ENCODE measurements at regions of chr7 and their contacts with region 1.

Region 1: GRCh38 chr7:142535123-142535779 is 214.0 kb upstream of the PRSS1 start:
- DNase-seq: peak; percentile 42
- H3K4me3 ChIP-seq: no peak overlapping the region
- H3K27me3 ChIP-seq: no peaks in the 10 kb centered on the region
- CTCF ChIP-seq: peak; percentile 87

Region 2: GRCh38 chr7:142485617-142486226 is 49.5 kb before region 1 on chr7:
- CTCF ChIA-PET with region 1: interaction called, 10 read pairs
- POLR2A ChIA-PET with region 1: no interaction called
- DNase-seq: no peak
- H3K4me3 ChIP-seq: no peak overlapping the region
- H3K27me3 ChIP-seq: peaks cover 6% of the 10 kb centered on the region; the same call in 1 of the 2 replicates
- CTCF ChIP-seq: peak; percentile 66

Region 3: DNA sequence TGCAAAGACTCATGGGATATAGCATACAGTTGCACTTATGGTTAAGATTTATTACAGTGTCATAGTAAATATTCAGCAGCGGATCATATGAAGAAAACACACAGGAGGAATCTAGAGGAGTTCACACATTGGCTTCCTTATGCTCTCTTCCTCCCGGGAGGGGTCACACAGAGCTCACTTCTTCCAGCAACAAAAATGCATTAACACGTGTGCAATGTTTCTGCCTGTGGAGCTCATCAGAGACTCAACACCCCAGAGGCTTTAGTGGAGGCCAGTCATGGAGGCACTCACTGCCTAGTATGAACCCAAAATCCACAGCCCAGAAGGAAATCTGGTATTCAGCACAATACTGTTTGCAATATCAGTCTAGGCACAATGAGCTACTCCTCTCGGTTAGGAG is 11.2 kb after region 1 on chr7:
- CTCF ChIA-PET with region 1: interaction called, 14 read pairs
- POLR2A ChIA-PET with region 1: no interaction called
- DNase-seq: no peak
- H3K4me3 ChIP-seq: no peak overlapping the region
- H3K27me3 ChIP-seq: no peaks in the 10 kb centered on the region
- CTCF ChIP-seq: no peak

Region 4: DNA sequence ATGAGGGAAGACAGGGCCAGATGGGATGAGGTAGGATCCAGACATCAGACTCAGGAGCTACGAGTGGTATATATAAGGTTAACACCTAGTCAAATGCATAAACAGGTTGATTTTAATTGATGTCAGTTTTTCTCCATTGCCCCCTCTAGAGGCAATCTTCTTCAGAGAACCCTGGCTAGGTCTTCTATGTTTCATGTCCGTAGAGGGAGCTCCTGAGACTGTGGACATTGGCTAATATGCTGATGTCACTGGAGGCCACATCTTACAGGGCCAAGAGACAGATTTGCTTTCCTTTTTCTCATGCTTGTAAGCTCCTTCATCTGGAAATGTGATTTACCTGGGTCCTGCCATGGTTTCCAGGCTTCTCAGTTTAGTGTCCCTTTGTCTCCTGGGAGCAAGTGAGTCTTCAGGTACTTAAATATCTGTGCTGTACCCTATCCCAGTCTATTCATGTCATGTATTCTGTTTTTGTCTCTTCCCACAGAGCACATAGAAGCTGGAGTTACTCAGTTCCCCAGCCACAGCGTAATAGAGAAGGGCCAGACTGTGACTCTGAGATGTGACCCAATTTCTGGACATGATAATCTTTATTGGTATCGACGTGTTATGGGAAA is 52.4 kb after region 1 on chr7:
- CTCF ChIA-PET with region 1: interaction called, 68 read pairs
- POLR2A ChIA-PET with region 1: no interaction called
- DNase-seq: no peak
- H3K4me3 ChIP-seq: no peak overlapping the region
- H3K27me3 ChIP-seq: no peaks in the 10 kb centered on the region
- CTCF ChIP-seq: peak; percentile 84

Region 5: GRCh38 chr7:142632291-142633134 is 97.3 kb after region 1 on chr7:
- CTCF ChIA-PET with region 1: interaction called, 56 read pairs
- POLR2A ChIA-PET with region 1: no interaction called
- DNase-seq: no peak
- H3K4me3 ChIP-seq: no peak overlapping the region
- H3K27me3 ChIP-seq: no peaks in the 10 kb centered on the region
- CTCF ChIP-seq: peak; percentile 79

Region 6: DNA sequence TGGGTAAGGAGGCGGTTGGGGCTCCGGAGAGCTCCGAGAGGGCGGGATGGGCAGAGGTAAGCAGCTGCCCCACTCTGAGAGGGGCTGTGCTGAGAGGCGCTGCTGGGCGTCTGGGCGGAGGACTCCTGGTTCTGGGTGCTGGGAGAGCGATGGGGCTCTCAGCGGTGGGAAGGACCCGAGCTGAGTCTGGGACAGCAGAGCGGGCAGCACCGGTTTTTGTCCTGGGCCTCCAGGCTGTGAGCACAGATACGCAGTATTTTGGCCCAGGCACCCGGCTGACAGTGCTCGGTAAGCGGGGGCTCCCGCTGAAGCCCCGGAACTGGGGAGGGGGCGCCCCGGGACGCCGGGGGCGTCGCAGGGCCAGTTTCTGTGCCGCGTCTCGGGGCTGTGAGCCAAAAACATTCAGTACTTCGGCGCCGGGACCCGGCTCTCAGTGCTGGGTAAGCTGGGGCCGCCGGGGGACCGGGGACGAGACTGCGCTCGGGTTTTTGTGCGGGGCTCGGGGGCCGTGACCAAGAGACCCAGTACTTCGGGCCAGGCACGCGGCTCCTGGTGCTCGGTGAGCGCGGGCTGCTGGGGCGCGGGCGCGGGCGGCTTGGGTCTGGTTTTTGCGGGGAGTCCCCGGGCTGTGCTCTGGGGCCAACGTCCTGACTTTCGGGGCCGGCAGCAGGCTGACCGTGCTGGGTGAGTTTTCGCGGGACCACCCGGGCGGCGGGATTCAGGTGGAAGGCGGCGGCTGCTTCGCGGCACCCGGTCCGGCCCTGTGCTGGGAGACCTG is 261.5 kb after region 1 on chr7:
- CTCF ChIA-PET with region 1: interaction called, 13 read pairs
- POLR2A ChIA-PET with region 1: no interaction called
- DNase-seq: no peak
- H3K4me3 ChIP-seq: peak overlapping the region; percentile 28
- H3K27me3 ChIP-seq: peaks cover 35% of the 10 kb centered on the region
- CTCF ChIP-seq: no peak